ENCODE measurements at regions of chr11 and their contacts with region 1.

Region 1: DNA sequence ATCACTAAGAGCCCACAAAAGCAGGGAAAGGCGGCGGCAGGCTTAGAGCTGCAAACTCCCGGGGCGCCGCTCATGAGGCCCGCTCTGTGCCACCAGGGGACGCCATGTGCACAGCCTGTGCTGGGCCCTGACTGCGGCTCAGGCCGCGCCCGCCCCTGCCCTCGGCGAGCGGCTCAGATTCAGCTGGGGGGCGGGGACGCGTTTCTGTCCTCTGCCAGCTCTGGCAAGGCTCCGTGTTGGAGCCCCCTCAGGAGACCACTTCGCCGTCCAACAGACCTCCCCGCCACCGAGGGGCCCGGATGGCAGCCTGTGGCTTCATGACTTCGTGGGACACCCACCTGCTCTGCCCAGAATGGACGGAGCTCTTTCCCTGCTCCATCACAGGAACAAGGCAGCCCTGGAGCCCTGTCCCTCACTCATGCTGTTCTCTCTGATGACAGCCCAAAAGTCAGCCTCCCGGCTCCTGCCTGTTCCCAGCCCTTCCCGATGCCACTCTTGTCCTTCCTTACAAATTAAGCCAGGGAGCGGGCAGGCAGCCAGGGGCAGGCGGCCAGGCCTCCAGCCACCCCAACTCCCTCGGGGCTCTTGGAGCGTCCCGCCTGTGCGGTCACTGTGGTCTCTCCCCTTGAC is 69.1 kb downstream of the NAT10 start:
- DNase-seq: peak; percentile 82 to 93 (median 83)
- ATAC-seq: peak; percentile 94 to 99 (median 98)
- H3K4me3 ChIP-seq: peak overlapping the region in 10 of 12 donors; percentile 17 to 48 (median 32)
- H3K27ac ChIP-seq: peak overlapping the region in 1 of 12 donors; percentile 24
- H3K4me1 ChIP-seq: peaks cover 0 to 17% (median 11%) of the 10 kb centered on the region in 12 donors
- H3K27me3 ChIP-seq: no peaks in the 10 kb centered on the region
- CTCF ChIP-seq: peak; percentile 85 to 97 (median 93)
- POLR2A ChIP-seq: no peak

Region 2: GRCh38 chr11:34480314-34480713 is 305.8 kb after region 1 on chr11:
- intact Hi-C with region 1: loop called in 1 of 10 experiments (anchors 10 kb)
- DNase-seq: no peak
- ATAC-seq: no peak
- H3K4me3 ChIP-seq: no peak overlapping the region
- H3K27ac ChIP-seq: no peak overlapping the region
- H3K4me1 ChIP-seq: no peaks in the 10 kb centered on the region
- H3K27me3 ChIP-seq: peaks cover 0 to 4% (median 0%) of the 10 kb centered on the region in 9 donors
- CTCF ChIP-seq: no peak
- POLR2A ChIP-seq: no peak